T-cell (primary cell): ENCODE measurements at regions of chr3 and their contacts with region 1.

Region 1: GRCh38 chr3:63967675-63968611 is 55.4 kb downstream of the PSMD6 start:
- DNase-seq: peak; percentile 10 to 87 (median 43)
- ATAC-seq: peak; percentile 80 to 83 (median 82)
- H3K4me3 ChIP-seq: peak overlapping the region; percentile 76 to 91
- H3K4me3 Mint-ChIP-seq: peak overlapping the region; percentile 91 to 97 (median 95)
- H3K27ac ChIP-seq: peak overlapping the region; percentile 81
- H3K27ac Mint-ChIP-seq: peak overlapping the region; percentile 95 to 98
- H3K4me1 ChIP-seq: peaks cover 37 to 50% of the 10 kb centered on the region in 2 experiments
- H3K4me1 Mint-ChIP-seq: peaks cover 71 to 78% (median 77%) of the 10 kb centered on the region in 3 donors
- H3K27me3 ChIP-seq: no peaks in the 10 kb centered on the region
- H3K27me3 Mint-ChIP-seq: no peaks in the 10 kb centered on the region

Region 2: DNA sequence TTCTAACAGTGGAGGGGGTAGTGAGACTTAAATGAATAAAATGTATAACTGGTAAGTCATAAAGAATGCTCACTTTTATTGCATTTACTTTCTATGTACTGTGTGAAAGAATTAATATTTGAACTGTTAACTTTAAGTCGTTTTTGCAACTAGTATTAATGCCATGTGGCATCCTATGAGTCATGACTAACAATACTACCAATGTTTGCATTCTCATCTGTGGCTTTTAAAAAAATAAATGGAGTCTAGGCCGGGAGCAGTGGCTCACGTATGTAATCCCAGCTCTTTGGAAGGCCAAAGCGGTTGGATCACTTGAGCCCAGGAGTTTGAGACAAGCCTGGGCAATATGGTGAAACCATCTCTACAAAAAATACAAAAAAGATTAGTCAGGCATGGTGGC is 143.6 kb before region 1 on chr3:
- CTCF ChIA-PET with region 1: no interaction called
- POLR2A ChIA-PET with region 1: no interaction called
- DNase-seq: no peak
- ATAC-seq: no peak
- H3K4me3 ChIP-seq: no peak overlapping the region
- H3K4me3 Mint-ChIP-seq: no peak overlapping the region
- H3K27ac ChIP-seq: no peak overlapping the region
- H3K27ac Mint-ChIP-seq: no peak overlapping the region
- H3K4me1 ChIP-seq: no peaks in the 10 kb centered on the region
- H3K4me1 Mint-ChIP-seq: no peaks in the 10 kb centered on the region
- H3K27me3 ChIP-seq: no peaks in the 10 kb centered on the region
- H3K27me3 Mint-ChIP-seq: no peaks in the 10 kb centered on the region

Region 3: DNA sequence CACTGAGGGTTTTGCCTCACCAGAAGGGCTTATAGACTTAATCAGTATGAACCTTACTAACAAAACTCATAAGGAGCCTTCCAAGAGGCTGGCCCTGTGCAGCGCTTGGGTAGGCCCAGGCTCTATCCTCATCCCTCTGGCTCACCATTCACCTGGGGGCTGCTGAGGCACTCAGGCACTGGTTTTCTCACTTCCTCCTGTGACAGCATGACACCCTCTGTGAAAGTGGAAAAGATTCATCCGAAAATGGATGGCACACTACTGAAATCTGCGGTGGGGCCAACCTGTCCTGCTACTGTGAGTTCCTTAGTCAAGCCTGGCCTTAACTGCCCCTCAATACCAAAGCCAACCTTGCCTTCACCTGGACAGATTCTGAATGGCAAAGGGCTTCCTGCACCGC is 14.0 kb after region 1 on chr3:
- CTCF ChIA-PET with region 1: interaction called, 54 to 220 read pairs
- POLR2A ChIA-PET with region 1: interaction called, 27 to 119 read pairs
- DNase-seq: no peak
- ATAC-seq: no peak
- H3K4me3 ChIP-seq: no peak overlapping the region
- H3K4me3 Mint-ChIP-seq: peak overlapping the region in 1 of 3 donors; percentile 25
- H3K27ac ChIP-seq: peak overlapping the region; percentile 69
- H3K27ac Mint-ChIP-seq: peak overlapping the region; percentile 88 to 96
- H3K4me1 ChIP-seq: peaks cover 40 to 50% of the 10 kb centered on the region in 2 experiments
- H3K4me1 Mint-ChIP-seq: peaks cover 83 to 89% (median 87%) of the 10 kb centered on the region in 3 donors
- H3K27me3 ChIP-seq: no peaks in the 10 kb centered on the region
- H3K27me3 Mint-ChIP-seq: no peaks in the 10 kb centered on the region

Region 4: DNA sequence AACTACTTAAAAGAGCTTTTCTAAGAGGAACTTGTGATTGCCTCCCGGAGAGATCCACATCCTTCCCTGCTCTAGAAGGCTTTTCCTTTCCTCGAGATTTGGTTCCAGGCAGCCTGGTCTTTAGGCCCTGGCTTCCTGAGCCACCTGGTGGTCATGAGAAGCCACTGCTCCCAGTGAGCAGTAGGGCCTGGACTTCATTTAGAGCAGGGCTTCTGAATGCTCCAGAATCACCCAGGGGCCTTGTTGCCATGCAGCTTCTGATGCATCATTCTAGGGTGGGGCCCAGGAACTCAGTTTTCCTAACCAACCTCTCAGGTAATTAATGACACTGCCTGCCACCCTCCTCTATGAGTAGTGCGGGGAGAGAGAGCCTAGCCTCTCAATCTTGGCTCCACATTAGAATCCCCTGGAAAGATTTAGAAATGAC is 25.7 kb after region 1 on chr3:
- CTCF ChIA-PET with region 1: interaction called, 56 to 80 read pairs
- POLR2A ChIA-PET with region 1: interaction called, 4 to 6 read pairs
- DNase-seq: peak; percentile 22 to 75 (median 49)
- ATAC-seq: peak; percentile 80 to 86 (median 82)
- H3K4me3 ChIP-seq: no peak overlapping the region
- H3K4me3 Mint-ChIP-seq: no peak overlapping the region
- H3K27ac ChIP-seq: no peak overlapping the region
- H3K27ac Mint-ChIP-seq: peak overlapping the region; percentile 70 to 74
- H3K4me1 ChIP-seq: peaks cover 0 to 19% of the 10 kb centered on the region in 2 experiments
- H3K4me1 Mint-ChIP-seq: peaks cover 47 to 61% (median 54%) of the 10 kb centered on the region in 3 donors
- H3K27me3 ChIP-seq: no peaks in the 10 kb centered on the region
- H3K27me3 Mint-ChIP-seq: no peaks in the 10 kb centered on the region